ENCODE measurements at regions of chr1 and their contacts with region 1.

Region 1: GRCh38 chr1:209787551-209787950 is 3.2 kb upstream of the C1orf74 start:
- DNase-seq: no peak
- H3K4me3 ChIP-seq: no peak overlapping the region
- H3K27ac ChIP-seq: peak overlapping the region; percentile 74 to 81 (median 79)
- H3K4me1 ChIP-seq: peaks cover 32 to 46% (median 39%) of the 10 kb centered on the region in 4 donors
- H3K27me3 ChIP-seq: no peaks in the 10 kb centered on the region
- CTCF ChIP-seq: no peak
- EP300 ChIP-seq: no peak
- POLR2A ChIP-seq: no peak

Region 2: DNA sequence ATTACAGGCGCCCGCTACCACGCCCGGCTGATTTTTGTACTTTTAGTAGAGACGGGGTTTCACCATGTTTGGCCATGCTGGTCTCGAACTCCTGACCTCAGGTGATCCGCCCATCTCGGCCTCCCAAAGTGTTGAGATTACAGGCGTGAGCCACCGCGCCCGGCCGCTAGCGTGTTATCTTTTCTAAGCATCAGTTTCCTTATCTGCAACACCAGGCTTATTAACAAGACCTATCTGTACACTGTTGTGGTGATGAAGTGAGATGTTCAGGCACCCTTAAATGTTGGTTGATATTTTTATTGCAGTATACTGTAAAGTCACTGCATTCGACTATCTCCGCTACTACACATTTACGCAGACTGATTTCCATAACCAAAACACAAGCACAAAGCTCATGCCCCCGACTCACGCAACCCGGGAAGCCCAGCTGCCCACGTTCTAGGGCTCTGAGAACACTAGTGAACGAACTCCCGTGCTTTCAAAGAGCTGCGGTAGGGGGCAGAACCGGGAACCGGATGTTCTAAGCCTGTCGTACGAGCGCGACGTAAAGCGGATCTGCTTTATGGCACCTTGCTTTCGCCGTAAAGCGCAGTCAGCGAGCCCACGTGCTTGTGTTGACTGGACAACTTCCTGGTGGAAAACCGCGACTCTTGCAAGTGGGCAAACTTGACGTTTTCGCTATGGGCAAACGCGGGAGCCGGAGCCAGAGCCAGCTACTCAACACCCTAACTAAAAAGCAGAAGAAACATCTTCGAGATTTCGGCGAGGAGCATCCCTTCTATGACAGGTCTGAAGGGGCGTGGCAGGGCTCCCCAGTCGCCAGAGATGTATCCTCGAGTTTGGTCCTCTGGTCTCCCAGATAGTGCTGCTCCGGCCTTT is 40.1 kb after region 1 on chr1 and contains the start of gene UTP25:
- intact Hi-C with region 1: loop called (anchors 2 kb)
- DNase-seq: peak; percentile 97
- H3K4me3 ChIP-seq: peak within 1 kb of the TSS; percentile 67 to 86 (median 82)
- H3K27ac ChIP-seq: peak within 1 kb of the TSS; percentile 64 to 74 (median 72)
- H3K4me1 ChIP-seq: peaks cover 12 to 21% (median 19%) of the 10 kb centered on the region in 4 donors
- H3K27me3 ChIP-seq: no peaks in the 10 kb centered on the region
- CTCF ChIP-seq: peak; percentile 74 to 87 (median 76)
- EP300 ChIP-seq: no peak
- POLR2A ChIP-seq: no peak
- total RNA-seq, gene UTP25: 3.7 to 8.0 (median 7.3) TPM